ENCODE measurements at regions of chr7 and their contacts with region 1.

Region 1: GRCh38 chr7:129825496-129826267 is 127.1 kb downstream of the UBE2H start:
- DNase-seq: peak; percentile 92
- ATAC-seq: peak; percentile 85
- H3K4me3 Mint-ChIP-seq: peak overlapping the region; percentile 89
- H3K27ac Mint-ChIP-seq: peak overlapping the region; percentile 89
- H3K4me1 Mint-ChIP-seq: peaks cover 26% of the 10 kb centered on the region
- H3K27me3 Mint-ChIP-seq: no peaks in the 10 kb centered on the region

Region 2: GRCh38 chr7:129611246-129612111 is 214.2 kb before region 1 on chr7 and contains the start of gene NRF1:
- CTCF ChIA-PET with region 1: interaction called, 14 read pairs
- POLR2A ChIA-PET with region 1: interaction called, 3 read pairs
- DNase-seq: peak; percentile 90
- ATAC-seq: peak; percentile 91
- H3K4me3 Mint-ChIP-seq: peak within 1 kb of the TSS; percentile 96
- H3K27ac Mint-ChIP-seq: peak within 1 kb of the TSS; percentile 97
- H3K4me1 Mint-ChIP-seq: peaks cover 55% of the 10 kb centered on the region
- H3K27me3 Mint-ChIP-seq: no peaks in the 10 kb centered on the region
- total RNA-seq, gene NRF1: 28.1 to 30.0 TPM

Region 3: DNA sequence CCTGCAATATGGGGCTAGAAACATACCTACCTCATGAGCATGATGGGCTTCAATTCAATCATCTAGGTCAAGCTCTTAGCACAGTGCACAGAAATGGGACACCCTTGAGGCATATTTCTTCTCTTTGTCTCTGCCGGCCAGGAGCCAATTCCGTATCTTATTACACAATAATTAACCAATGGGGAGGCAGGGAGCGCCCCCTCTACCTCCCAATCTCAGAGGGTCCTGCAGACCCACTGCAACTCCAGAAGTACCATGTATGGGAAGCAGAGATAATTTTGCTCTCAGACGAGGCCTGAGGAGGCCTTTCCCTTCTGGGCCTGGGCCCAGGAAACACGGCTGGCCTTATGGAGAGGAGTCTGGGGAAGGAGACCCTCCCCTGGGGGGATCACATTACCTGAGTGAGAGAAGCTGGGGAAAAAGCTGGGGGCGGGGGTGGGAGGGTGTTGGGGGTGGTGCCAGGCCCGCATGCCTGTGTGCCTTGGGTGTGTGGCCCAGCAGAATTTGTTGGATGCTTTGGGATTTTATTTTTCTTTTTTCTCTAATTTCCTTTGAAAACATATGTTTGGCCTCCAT is 28.4 kb before region 1 on chr7:
- CTCF ChIA-PET with region 1: no interaction called
- POLR2A ChIA-PET with region 1: no interaction called
- DNase-seq: no peak
- ATAC-seq: no peak
- H3K4me3 Mint-ChIP-seq: no peak overlapping the region
- H3K27ac Mint-ChIP-seq: no peak overlapping the region
- H3K4me1 Mint-ChIP-seq: no peaks in the 10 kb centered on the region
- H3K27me3 Mint-ChIP-seq: no peaks in the 10 kb centered on the region

Region 4: DNA sequence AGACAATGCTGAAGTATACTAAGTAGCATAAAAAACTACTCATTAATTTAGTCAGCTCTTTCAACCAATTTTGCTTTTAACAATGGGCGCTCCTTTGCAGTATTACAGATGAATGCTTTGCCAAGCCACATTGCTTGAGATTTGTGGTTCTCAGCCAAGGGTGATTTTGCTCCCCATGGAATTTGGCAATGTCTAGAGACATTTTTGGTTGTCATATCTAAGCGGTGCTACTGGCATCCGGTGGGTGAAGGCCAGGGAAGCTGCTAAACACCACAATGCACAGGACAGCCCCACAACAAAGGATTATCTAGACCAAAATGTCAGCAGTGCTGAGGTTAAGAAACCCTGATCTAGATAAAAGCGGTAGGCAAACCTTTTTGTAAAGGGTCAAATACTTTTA is 15.1 kb after region 1 on chr7:
- CTCF ChIA-PET with region 1: interaction called, 28 read pairs
- POLR2A ChIA-PET with region 1: no interaction called
- DNase-seq: no peak
- ATAC-seq: peak; percentile 34
- H3K4me3 Mint-ChIP-seq: no peak overlapping the region
- H3K27ac Mint-ChIP-seq: no peak overlapping the region
- H3K4me1 Mint-ChIP-seq: peaks cover 39% of the 10 kb centered on the region
- H3K27me3 Mint-ChIP-seq: no peaks in the 10 kb centered on the region

Region 5: DNA sequence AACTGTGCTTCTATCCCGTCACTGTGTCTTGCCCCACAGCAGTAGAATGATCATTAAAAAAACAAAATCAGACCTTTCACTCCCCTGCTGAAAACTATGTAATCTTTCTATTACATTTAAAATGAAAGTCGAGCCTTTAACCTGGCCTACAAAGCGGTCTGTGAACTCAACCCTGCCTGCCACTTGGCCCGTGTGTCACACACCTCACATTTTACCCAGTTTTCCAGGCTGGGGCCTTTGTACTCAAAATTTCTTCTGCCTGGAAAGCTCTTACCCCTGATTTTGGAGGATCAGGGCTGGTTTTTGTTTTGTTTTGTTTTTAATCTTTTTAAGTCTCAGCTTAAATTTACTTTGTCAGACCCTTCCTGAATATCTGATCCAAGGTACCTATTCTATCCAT is 45.0 kb after region 1 on chr7:
- CTCF ChIA-PET with region 1: interaction called, 12 read pairs
- POLR2A ChIA-PET with region 1: no interaction called
- DNase-seq: no peak
- ATAC-seq: no peak
- H3K4me3 Mint-ChIP-seq: no peak overlapping the region
- H3K27ac Mint-ChIP-seq: no peak overlapping the region
- H3K4me1 Mint-ChIP-seq: peaks cover 4% of the 10 kb centered on the region
- H3K27me3 Mint-ChIP-seq: no peaks in the 10 kb centered on the region

Measured in activated CD8-positive, alpha-beta T cell treated with anti-CD3 and anti-CD28 coated beads, Interleukin-2, amount 10 ng/mL, durations not matched to agents 7 days and 5 days (primary cell).